Heart right ventricle (tissue), 16 donors: ENCODE measurements at regions of chr1 and their contacts with region 1.

Region 1: DNA sequence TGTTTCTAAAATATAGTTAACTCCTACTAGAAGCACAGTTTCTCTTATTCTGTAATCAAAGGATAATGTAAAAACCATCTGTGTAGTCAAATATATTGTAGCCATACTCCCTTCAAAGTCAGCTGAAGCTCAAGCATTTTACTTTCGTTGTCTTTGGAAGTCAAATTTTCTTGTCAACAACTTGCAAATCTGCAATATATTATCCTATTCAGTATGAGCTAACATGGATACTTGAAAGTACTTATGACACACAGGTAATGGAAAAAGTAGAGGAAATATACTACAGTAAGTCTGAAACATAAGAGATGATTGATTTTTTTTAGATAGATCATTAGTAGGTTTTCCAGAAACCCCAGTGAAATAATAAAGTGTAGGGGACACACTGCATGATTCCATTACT is 121.5 kb downstream of the COL24A1 start:
- DNase-seq: no peak
- ATAC-seq: no peak
- H3K4me3 ChIP-seq: no peak overlapping the region
- H3K27ac ChIP-seq: no peak overlapping the region
- H3K4me1 ChIP-seq: no peaks in the 10 kb centered on the region
- H3K27me3 ChIP-seq: peaks cover 0 to 3% (median 0%) of the 10 kb centered on the region in 7 donors
- CTCF ChIP-seq: no peak

Region 2: GRCh38 chr1:84973498-84974334 is 1061.4 kb before region 1 on chr1:
- intact Hi-C with region 1: loop called in 1 of 10 experiments (anchors 5 kb)
- DNase-seq: no peak
- ATAC-seq: no peak
- H3K4me3 ChIP-seq: no peak overlapping the region
- H3K27ac ChIP-seq: no peak overlapping the region
- H3K4me1 ChIP-seq: peaks cover 0 to 5% (median 0%) of the 10 kb centered on the region in 9 donors
- H3K27me3 ChIP-seq: no peaks in the 10 kb centered on the region
- CTCF ChIP-seq: no peak

Region 3: DNA sequence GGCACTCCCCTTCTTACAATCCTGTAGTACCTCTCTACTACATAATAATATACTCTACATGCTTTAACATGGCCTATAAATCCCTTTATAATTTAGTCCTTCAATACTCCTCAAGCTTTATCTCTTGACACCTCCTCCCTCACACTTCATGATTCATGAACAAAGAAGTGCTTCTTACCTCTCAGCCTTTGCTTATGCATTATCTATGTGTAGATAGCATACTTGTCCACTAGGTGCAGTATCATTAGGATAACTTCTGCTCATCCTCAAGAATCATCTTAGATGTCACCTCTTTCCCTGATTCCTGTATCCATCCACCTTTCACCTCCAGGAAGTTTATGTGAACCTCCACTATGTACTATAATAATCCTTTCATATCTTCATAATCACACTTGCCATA is 47.1 kb after region 1 on chr1:
- intact Hi-C with region 1: no loop called
- DNase-seq: no peak
- ATAC-seq: no peak
- H3K4me3 ChIP-seq: no peak overlapping the region
- H3K27ac ChIP-seq: no peak overlapping the region
- H3K4me1 ChIP-seq: no peaks in the 10 kb centered on the region
- H3K27me3 ChIP-seq: no peaks in the 10 kb centered on the region
- CTCF ChIP-seq: no peak